ENCODE measurements at regions of chr2 and their contacts with region 1.

Region 1: GRCh38 chr2:11248-11941 is 34.9 kb downstream of the FAM110C start:
- DNase-seq: peak; percentile 67
- ATAC-seq: peak; percentile 44
- H3K4me3 Mint-ChIP-seq: no peak overlapping the region
- H3K27ac Mint-ChIP-seq: no peak overlapping the region
- H3K4me1 Mint-ChIP-seq: no peaks in the 10 kb centered on the region
- H3K27me3 Mint-ChIP-seq: peaks cover 14% of the 10 kb centered on the region

Region 2: GRCh38 chr2:24107-24506 is 12.7 kb after region 1 on chr2:
- CTCF ChIA-PET with region 1: interaction called, 17 read pairs
- POLR2A ChIA-PET with region 1: no interaction called
- DNase-seq: no peak
- ATAC-seq: no peak
- H3K4me3 Mint-ChIP-seq: no peak overlapping the region
- H3K27ac Mint-ChIP-seq: no peak overlapping the region
- H3K4me1 Mint-ChIP-seq: peaks cover 35% of the 10 kb centered on the region
- H3K27me3 Mint-ChIP-seq: peaks cover 7% of the 10 kb centered on the region

Region 3: DNA sequence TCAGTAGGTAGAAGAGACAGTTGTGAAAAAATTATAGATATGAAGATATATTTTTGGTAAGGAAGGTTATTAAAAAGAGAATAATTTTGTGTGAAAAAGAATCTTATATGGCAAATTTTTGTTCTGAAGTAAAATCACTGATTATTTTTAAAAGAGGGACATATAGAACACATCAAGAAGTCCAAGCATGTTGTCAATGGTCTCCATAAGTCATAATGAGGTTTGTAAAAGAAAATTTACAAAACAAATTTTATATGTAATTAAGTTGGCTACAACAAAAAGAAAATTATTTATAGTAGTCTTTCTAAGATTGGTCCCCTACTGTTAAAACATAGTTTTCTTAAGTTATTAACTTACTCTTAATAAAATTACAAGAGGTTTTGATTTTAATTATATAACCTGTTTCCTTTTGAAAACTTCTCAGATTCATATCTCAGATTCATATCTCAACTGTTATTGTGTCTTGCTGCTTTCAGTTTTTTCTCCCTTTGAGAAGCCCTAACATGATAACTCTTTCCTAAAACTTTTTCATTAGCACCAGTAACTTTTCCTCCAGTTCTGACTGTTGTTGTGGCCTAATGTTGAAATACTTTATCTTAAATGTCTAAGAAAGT is 171.2 kb after region 1 on chr2:
- CTCF ChIA-PET with region 1: no interaction called
- POLR2A ChIA-PET with region 1: no interaction called
- DNase-seq: no peak
- ATAC-seq: no peak
- H3K4me3 Mint-ChIP-seq: no peak overlapping the region
- H3K27ac Mint-ChIP-seq: no peak overlapping the region
- H3K4me1 Mint-ChIP-seq: peaks cover 1% of the 10 kb centered on the region
- H3K27me3 Mint-ChIP-seq: peaks cover 8% of the 10 kb centered on the region

Region 4: DNA sequence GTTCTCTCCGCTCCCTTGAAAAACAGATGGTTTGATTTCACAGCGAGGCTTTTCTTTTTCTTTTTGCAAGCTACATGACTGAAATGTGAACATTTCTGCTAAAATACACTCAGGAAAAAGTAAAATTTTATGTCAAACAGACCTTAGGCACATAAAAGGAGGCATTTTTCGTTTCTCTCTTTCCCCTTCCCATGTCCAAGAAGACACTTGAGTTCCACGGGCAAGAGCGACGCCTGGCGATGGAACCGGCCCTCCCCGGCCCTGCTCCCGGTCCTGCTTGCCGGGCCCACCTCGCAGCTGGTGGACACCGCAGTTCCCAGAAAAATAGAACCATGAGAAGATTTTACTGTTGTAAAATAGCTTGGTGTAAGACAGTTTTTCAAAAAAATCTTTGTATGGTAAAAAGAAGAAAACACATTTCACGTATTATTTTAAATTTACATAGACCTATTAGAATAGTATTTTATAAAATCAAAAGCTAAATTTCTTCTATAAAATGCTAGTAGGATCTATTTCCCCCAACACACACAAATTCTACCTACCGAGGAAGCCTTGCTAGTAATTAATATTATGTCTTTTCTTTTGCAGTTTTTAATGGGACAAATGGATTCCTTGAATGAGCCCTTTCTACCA is 278.8 kb after region 1 on chr2:
- CTCF ChIA-PET with region 1: interaction called, 10 read pairs
- POLR2A ChIA-PET with region 1: no interaction called
- DNase-seq: peak; percentile 50
- ATAC-seq: peak; percentile 37
- H3K4me3 Mint-ChIP-seq: peak overlapping the region; percentile 52
- H3K27ac Mint-ChIP-seq: no peak overlapping the region
- H3K4me1 Mint-ChIP-seq: peaks cover 9% of the 10 kb centered on the region
- H3K27me3 Mint-ChIP-seq: peaks cover 46% of the 10 kb centered on the region